Activated CD8-positive, alpha-beta T cell treated with anti-CD3 and anti-CD28 coated beads, Interleukin-2, amount 10 ng/mL, durations not matched to agents 7 days and 5 days (primary cell): ENCODE measurements at regions of chr4 and their contacts with region 1.

Region 1: GRCh38 chr4:102620697-102621497 is 119.7 kb downstream of the NFKB1 start:
- DNase-seq: no peak
- ATAC-seq: peak; percentile 20
- H3K4me3 Mint-ChIP-seq: no peak overlapping the region
- H3K27ac Mint-ChIP-seq: peak overlapping the region; percentile 44
- H3K4me1 Mint-ChIP-seq: peaks cover 68% of the 10 kb centered on the region
- H3K27me3 Mint-ChIP-seq: no peaks in the 10 kb centered on the region

Region 2: GRCh38 chr4:102449751-102450352 is 171.0 kb before region 1 on chr4:
- CTCF ChIA-PET with region 1: interaction called, 38 read pairs
- POLR2A ChIA-PET with region 1: interaction called, 6 read pairs
- DNase-seq: peak; percentile 81
- ATAC-seq: peak; percentile 70
- H3K4me3 Mint-ChIP-seq: no peak overlapping the region
- H3K27ac Mint-ChIP-seq: no peak overlapping the region
- H3K4me1 Mint-ChIP-seq: peaks cover 41% of the 10 kb centered on the region
- H3K27me3 Mint-ChIP-seq: peaks cover 2% of the 10 kb centered on the region

Region 3: DNA sequence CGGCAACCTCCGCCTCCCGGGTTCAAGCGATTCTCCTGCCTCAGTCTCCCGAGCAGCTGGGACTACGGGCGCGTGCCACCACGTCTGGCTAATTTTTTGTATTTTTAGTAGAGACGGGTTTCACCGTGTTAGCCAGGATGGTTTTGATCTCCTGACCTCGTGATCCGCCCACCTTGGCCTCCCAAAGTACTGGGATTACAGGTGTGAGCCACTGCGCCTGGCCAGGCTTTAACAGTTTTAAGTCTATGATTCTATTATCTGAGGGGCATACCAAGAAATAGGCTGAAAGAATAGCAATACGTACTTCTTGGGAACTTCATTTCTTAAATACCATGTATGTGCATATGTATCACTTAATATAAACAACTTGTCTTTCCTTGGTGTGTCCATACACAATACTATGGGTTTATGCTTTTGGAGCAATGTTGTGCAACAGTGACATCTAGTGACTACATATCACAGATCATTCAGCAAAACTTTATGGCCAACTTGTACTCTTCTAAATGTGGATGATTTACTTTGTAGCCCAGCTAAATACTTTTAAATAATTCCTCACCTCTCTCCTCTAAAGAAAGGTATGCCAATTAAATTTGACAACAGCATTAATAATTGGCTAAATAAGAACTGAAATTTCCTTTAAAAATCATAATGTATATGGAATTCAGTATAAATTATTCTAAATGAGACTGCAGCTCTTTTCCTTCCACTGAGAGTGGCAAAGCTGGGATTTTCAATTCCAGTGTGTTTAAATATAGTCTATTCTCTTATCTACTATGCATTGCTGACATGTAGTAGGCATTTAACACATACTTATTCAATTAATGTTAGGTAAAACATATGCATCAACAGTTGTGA is 388.2 kb after region 1 on chr4:
- CTCF ChIA-PET with region 1: interaction called, 18 read pairs
- POLR2A ChIA-PET with region 1: no interaction called
- DNase-seq: peak; percentile 55
- ATAC-seq: peak; percentile 96
- H3K4me3 Mint-ChIP-seq: no peak overlapping the region
- H3K27ac Mint-ChIP-seq: no peak overlapping the region
- H3K4me1 Mint-ChIP-seq: no peaks in the 10 kb centered on the region
- H3K27me3 Mint-ChIP-seq: peaks cover 8% of the 10 kb centered on the region